ENCODE measurements at regions of chr12 and their contacts with region 1.

Region 1: GRCh38 chr12:123905319-123905925 is 67.2 kb downstream of the CCDC92 start:
- DNase-seq: peak; percentile 39 to 58 (median 41)
- H3K4me3 ChIP-seq: no peak overlapping the region
- H3K4me3 Mint-ChIP-seq: no peak overlapping the region
- H3K27ac ChIP-seq: no peak overlapping the region
- H3K27ac Mint-ChIP-seq: no peak overlapping the region
- H3K4me1 ChIP-seq: no peaks in the 10 kb centered on the region
- H3K4me1 Mint-ChIP-seq: peaks cover 4% of the 10 kb centered on the region
- H3K27me3 ChIP-seq: no peaks in the 10 kb centered on the region
- H3K27me3 Mint-ChIP-seq: peaks cover 2 to 9% (median 3%) of the 10 kb centered on the region in 3 donors
- CTCF ChIP-seq: peak; percentile 89

Region 2: GRCh38 chr12:123822804-123823203 is 82.6 kb before region 1 on chr12:
- intact Hi-C with region 1: no loop called
- DNase-seq: no peak
- H3K4me3 ChIP-seq: no peak overlapping the region
- H3K4me3 Mint-ChIP-seq: no peak overlapping the region
- H3K27ac ChIP-seq: no peak overlapping the region
- H3K27ac Mint-ChIP-seq: no peak overlapping the region
- H3K4me1 ChIP-seq: no peaks in the 10 kb centered on the region
- H3K4me1 Mint-ChIP-seq: no peaks in the 10 kb centered on the region
- H3K27me3 ChIP-seq: no peaks in the 10 kb centered on the region
- H3K27me3 Mint-ChIP-seq: peaks cover 3 to 12% (median 5%) of the 10 kb centered on the region in 3 donors
- CTCF ChIP-seq: no peak

Region 3: GRCh38 chr12:123983822-123984485 is 78.5 kb after region 1 on chr12:
- intact Hi-C with region 1: loop called (anchors 2 to 5 kb)
- DNase-seq: peak; percentile 24 to 50 (median 47)
- H3K4me3 ChIP-seq: no peak overlapping the region
- H3K4me3 Mint-ChIP-seq: no peak overlapping the region
- H3K27ac ChIP-seq: no peak overlapping the region
- H3K27ac Mint-ChIP-seq: peak overlapping the region in 2 of 7 donors; percentile 1 to 3
- H3K4me1 ChIP-seq: no peaks in the 10 kb centered on the region
- H3K4me1 Mint-ChIP-seq: peaks cover 9% of the 10 kb centered on the region
- H3K27me3 ChIP-seq: no peaks in the 10 kb centered on the region
- H3K27me3 Mint-ChIP-seq: peaks cover 0 to 6% (median 0%) of the 10 kb centered on the region in 3 donors
- CTCF ChIP-seq: peak; percentile 64

Region 4: GRCh38 chr12:124087266-124088051 is 182.0 kb after region 1 on chr12:
- intact Hi-C with region 1: no loop called
- DNase-seq: no peak
- H3K4me3 ChIP-seq: no peak overlapping the region
- H3K4me3 Mint-ChIP-seq: no peak overlapping the region
- H3K27ac ChIP-seq: no peak overlapping the region
- H3K27ac Mint-ChIP-seq: no peak overlapping the region
- H3K4me1 ChIP-seq: no peaks in the 10 kb centered on the region
- H3K4me1 Mint-ChIP-seq: no peaks in the 10 kb centered on the region
- H3K27me3 ChIP-seq: no peaks in the 10 kb centered on the region
- H3K27me3 Mint-ChIP-seq: peaks cover 3 to 9% (median 6%) of the 10 kb centered on the region in 3 donors
- CTCF ChIP-seq: no peak

Region 5: DNA sequence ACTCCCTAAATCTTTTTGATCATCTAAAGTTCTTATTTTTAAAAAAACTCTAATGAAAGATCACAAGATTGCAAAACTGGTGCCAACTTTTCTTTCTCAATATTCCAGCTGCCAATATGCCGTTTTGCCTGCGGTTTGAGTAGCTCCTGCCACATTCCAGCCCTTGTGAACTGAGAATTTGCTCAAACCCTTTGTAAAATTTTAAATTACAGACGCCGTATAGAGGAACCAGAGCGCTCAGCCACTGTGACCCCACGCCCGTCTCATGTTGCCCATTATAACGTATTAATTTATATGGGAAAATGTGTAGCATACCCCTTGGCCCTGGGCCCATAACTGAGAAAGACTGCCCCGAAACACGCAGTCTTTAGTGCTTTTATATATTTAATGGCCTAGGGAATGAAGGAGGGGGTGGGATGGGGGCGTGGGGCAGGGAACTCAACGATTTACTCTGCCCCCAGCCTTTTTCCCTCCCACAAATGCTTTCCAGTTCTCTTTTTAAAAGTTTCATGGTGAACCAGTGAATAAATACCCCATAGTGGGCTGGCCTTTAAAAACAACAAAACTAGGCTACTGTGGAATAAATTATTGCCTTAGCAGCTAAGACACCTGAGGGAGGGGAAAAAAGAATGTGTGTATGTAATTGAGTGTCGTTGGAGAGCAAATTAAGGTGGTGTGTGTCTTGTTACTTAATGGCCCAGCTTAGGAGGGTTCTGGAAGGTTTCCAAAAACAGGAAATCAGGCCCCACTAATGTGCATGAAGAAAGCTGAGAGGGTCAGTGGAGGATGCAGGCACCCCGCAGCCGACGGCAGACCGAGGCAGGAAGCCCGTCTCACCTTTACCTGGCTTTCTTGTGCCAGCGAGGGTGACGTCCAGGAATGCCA is 343.8 kb after region 1 on chr12:
- intact Hi-C with region 1: no loop called
- DNase-seq: no peak
- H3K4me3 ChIP-seq: no peak overlapping the region
- H3K4me3 Mint-ChIP-seq: no peak overlapping the region
- H3K27ac ChIP-seq: no peak overlapping the region
- H3K27ac Mint-ChIP-seq: peak overlapping the region in 5 of 7 donors; percentile 20 to 96 (median 92)
- H3K4me1 ChIP-seq: peaks cover 48 to 58% of the 10 kb centered on the region in 2 donors
- H3K4me1 Mint-ChIP-seq: peaks cover 49% of the 10 kb centered on the region
- H3K27me3 ChIP-seq: no peaks in the 10 kb centered on the region
- H3K27me3 Mint-ChIP-seq: peaks cover 0 to 9% (median 0%) of the 10 kb centered on the region in 3 donors
- CTCF ChIP-seq: no peak